CD4-positive, alpha-beta T cell (primary cell): ENCODE measurements at regions of chr3 and their contacts with region 1.

Region 1: DNA sequence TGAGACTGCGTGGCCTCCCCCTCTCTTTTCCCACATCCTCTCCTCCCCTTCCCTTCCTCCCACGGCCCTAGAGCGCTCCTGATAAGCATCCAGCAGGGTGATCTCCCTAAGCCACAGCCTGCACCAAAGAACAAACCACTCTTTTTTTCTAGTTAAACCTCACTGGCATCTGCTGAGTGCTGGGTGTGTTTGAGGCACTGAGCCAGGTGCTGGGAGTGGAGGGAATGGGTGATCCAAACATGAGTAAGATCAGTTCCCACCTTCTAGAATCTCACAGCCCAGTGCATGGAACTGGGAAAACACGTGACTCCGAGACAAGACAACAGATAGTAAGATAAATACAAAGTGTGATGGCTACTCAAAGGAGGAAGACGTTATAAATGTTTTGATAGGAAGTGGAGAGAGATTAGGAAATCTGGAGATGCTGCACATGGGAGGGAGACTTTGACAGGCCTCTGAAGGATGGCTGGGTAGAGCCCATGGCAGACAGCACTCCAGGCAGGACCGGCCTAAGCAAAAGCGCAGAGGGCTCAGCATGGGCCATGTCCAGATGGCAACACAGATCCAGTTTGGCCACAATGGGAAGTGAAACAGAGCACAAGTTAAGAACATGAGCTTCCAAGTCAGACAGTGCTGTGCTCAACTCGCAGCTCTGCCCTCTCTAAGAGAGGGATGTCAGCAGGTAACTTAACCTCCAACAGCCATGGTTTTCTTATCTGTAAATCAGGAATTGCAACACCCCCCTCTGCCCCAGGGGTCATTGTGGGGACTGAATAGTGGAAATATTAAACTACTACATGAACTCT is 55.6 kb downstream of the CCR3 start:
- DNase-seq: no peak
- ATAC-seq: no peak
- H3K4me3 ChIP-seq: no peak overlapping the region
- H3K4me3 Mint-ChIP-seq: no peak overlapping the region
- H3K27ac ChIP-seq: peak overlapping the region in 1 of 2 donors; percentile 33
- H3K27ac Mint-ChIP-seq: peak overlapping the region; percentile 43
- H3K4me1 ChIP-seq: peaks cover 81% of the 10 kb centered on the region
- H3K4me1 Mint-ChIP-seq: peaks cover 80% of the 10 kb centered on the region
- H3K27me3 ChIP-seq: no peaks in the 10 kb centered on the region
- H3K27me3 Mint-ChIP-seq: no peaks in the 10 kb centered on the region
- CTCF ChIP-seq: no peak

Region 2: DNA sequence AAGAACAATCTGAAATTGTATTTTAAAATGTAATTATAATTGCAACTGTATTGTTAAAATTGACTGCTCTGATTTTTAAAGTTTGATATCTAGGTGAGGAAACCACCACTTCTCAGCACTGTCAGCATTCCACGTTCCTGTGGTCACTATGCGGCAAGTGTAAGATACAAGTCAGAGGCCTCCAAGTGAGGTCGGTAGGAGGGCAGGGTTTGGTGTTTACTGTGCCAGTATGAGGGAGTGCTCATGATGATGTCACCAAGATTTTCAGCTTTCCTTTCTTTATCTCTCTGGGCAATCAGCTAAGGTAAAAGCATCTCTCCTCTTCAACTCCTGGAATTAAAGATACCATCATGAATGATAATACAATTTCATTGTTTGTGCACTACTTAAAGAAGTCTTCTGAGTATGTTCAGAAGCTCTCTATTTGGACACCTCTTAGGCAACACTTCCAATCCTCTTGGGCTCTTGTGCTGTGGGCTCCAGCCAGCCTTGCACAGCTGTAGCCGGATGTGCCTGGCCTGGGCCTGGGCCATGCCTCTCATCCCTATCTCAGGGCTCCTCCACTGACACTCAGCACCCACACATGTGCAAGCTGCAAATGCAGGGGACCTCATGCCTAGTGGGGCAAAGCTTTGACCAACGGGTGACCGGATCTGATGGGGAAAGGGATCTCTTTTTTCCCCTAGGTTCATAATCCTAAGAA is 12.7 kb before region 1 on chr3:
- CTCF ChIA-PET with region 1: no interaction called
- POLR2A ChIA-PET with region 1: interaction called, 12 read pairs
- intact Hi-C with region 1: no loop called
- DNase-seq: peak in 8 of 14 experiments; percentile 11 to 88 (median 44)
- ATAC-seq: peak; percentile 74
- H3K4me3 ChIP-seq: no peak overlapping the region
- H3K4me3 Mint-ChIP-seq: peak overlapping the region; percentile 60
- H3K27ac ChIP-seq: peak overlapping the region in 1 of 2 donors; percentile 64
- H3K27ac Mint-ChIP-seq: peak overlapping the region; percentile 72
- H3K4me1 ChIP-seq: peaks cover 70% of the 10 kb centered on the region
- H3K4me1 Mint-ChIP-seq: peaks cover 53% of the 10 kb centered on the region
- H3K27me3 ChIP-seq: no peaks in the 10 kb centered on the region
- H3K27me3 Mint-ChIP-seq: no peaks in the 10 kb centered on the region
- CTCF ChIP-seq: no peak